ENCODE measurements at regions of chr20 and their contacts with region 1.

Region 1: GRCh38 chr20:31547017-31547675 is 32.9 kb downstream of the HM13 start:
- DNase-seq: peak; percentile 88
- ATAC-seq: peak; percentile 82
- H3K4me3 ChIP-seq: peak overlapping the region; percentile 48 to 81 (median 65)
- H3K4me3 Mint-ChIP-seq: peak overlapping the region; percentile 97
- H3K27ac ChIP-seq: peak overlapping the region; percentile 56 to 85
- H3K27ac Mint-ChIP-seq: peak overlapping the region; percentile 98
- H3K4me1 ChIP-seq: peaks cover 8 to 9% of the 10 kb centered on the region in 2 donors
- H3K4me1 Mint-ChIP-seq: peaks cover 19% of the 10 kb centered on the region
- H3K27me3 ChIP-seq: no peaks in the 10 kb centered on the region
- H3K27me3 Mint-ChIP-seq: no peaks in the 10 kb centered on the region
- CTCF ChIP-seq: no peak

Region 2: DNA sequence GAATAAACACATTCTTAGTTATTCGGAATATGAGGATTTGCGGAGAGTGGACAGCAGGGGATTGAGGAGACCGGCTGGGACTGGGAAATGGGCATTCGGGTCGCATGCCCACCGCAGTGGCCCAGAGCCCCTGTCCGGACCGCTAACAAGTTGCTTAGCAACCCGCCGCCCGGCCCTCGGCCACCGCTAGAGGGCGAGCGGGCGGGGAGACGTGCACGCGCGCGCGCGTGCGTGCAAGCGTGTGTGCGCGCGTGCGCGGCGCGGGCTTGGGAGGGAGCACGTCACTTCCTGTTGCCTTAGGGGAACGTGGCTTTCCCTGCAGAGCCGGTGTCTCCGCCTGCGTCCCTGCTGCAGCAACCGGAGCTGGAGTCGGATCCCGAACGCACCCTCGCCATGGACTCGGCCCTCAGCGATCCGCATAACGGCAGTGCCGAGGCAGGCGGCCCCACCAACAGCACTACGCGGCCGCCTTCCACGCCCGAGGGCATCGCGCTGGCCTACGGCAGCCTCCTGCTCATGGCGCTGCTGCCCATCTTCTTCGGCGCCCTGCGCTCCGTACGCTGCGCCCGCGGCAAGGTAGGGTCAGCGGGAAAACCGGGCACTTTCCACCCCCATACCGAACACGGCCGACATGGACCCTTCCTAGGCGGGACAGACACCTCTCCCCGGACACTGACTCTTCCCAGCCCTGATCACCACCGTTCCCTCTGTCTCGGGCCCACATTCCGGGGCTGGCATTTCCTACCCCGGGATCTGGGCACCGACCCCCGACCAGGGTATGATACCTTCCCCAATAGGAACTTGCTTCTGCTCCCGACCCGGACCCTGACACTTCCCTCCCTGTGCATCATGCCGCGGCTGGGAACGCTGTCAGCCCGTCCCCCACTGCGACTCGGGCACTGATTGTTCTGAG is 32.7 kb before region 1 on chr20 and contains the start of gene HM13:
- CTCF ChIA-PET with region 1: interaction called, 3 read pairs
- POLR2A ChIA-PET with region 1: no interaction called
- intact Hi-C with region 1: loop called (anchors 1 kb)
- DNase-seq: peak; percentile 95
- ATAC-seq: peak; percentile 90
- H3K4me3 ChIP-seq: peak within 1 kb of the TSS; percentile 74 to 91 (median 89)
- H3K4me3 Mint-ChIP-seq: no peak within 1 kb of the TSS
- H3K27ac ChIP-seq: peak within 1 kb of the TSS; percentile 9 to 76
- H3K27ac Mint-ChIP-seq: no peak within 1 kb of the TSS
- H3K4me1 ChIP-seq: peaks cover 27 to 31% of the 10 kb centered on the region in 2 donors
- H3K4me1 Mint-ChIP-seq: peaks cover 9% of the 10 kb centered on the region
- H3K27me3 ChIP-seq: no peaks in the 10 kb centered on the region
- H3K27me3 Mint-ChIP-seq: no peaks in the 10 kb centered on the region
- CTCF ChIP-seq: peak; percentile 95
- total RNA-seq, gene HM13: 85.1 and 94.3 TPM in 2 replicates

Region 3: GRCh38 chr20:31536575-31536974 is 10.6 kb before region 1 on chr20:
- CTCF ChIA-PET with region 1: no interaction called
- POLR2A ChIA-PET with region 1: no interaction called
- intact Hi-C with region 1: no loop called
- DNase-seq: no peak
- ATAC-seq: no peak
- H3K4me3 ChIP-seq: no peak overlapping the region
- H3K4me3 Mint-ChIP-seq: no peak overlapping the region
- H3K27ac ChIP-seq: no peak overlapping the region
- H3K27ac Mint-ChIP-seq: no peak overlapping the region
- H3K4me1 ChIP-seq: no peaks in the 10 kb centered on the region
- H3K4me1 Mint-ChIP-seq: no peaks in the 10 kb centered on the region
- H3K27me3 ChIP-seq: no peaks in the 10 kb centered on the region
- H3K27me3 Mint-ChIP-seq: no peaks in the 10 kb centered on the region
- CTCF ChIP-seq: no peak

Measured in B cell (primary cell).